ENCODE measurements at regions of chr4 and their contacts with region 1.

Region 1: GRCh38 chr4:164779811-164780216 is 25.9 kb downstream of the SMIM31 start:
- DNase-seq: peak; percentile 52 to 69
- H3K4me3 ChIP-seq: no peak overlapping the region
- H3K4me3 Mint-ChIP-seq: no peak overlapping the region
- H3K27ac Mint-ChIP-seq: no peak overlapping the region
- H3K4me1 ChIP-seq: peaks cover 20% of the 10 kb centered on the region
- H3K4me1 Mint-ChIP-seq: peaks cover 16% of the 10 kb centered on the region
- H3K27me3 ChIP-seq: no peaks in the 10 kb centered on the region
- H3K27me3 Mint-ChIP-seq: no peaks in the 10 kb centered on the region
- CTCF ChIP-seq: peak; percentile 76 to 78

Region 2: DNA sequence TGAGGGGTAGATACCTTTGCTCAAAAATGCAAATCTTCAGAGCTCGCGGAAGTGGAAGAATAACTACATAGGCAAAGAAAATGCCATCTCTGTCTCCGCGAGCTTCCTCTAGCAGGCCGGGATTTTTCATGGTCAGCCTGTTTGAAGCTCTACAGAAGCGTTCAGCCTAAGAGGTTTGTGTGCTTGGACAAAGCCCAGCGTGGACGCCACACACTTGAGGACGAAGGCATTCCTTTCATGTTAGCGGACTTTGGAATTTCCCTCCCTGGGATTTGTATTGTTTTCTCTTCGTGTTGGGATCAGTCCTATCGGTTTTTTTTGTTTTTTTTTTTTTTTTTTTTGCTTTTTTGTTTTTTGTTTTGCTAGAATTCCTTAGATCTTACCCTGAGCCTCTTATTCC is 27.8 kb after region 1 on chr4:
- CTCF ChIA-PET with region 1: no interaction called
- POLR2A ChIA-PET with region 1: no interaction called
- intact Hi-C with region 1: loop called (anchors 1 kb)
- DNase-seq: peak; percentile 82
- H3K4me3 ChIP-seq: 0 out of 2 replicates have a peak overlapping the region, but pooled peaks have one; percentile 1
- H3K4me3 Mint-ChIP-seq: peak overlapping the region; percentile 33
- H3K27ac Mint-ChIP-seq: peak overlapping the region; percentile 82
- H3K4me1 ChIP-seq: peaks cover 46% of the 10 kb centered on the region
- H3K4me1 Mint-ChIP-seq: peaks cover 11% of the 10 kb centered on the region
- H3K27me3 ChIP-seq: no peaks in the 10 kb centered on the region
- H3K27me3 Mint-ChIP-seq: no peaks in the 10 kb centered on the region
- CTCF ChIP-seq: no peak

Region 3: DNA sequence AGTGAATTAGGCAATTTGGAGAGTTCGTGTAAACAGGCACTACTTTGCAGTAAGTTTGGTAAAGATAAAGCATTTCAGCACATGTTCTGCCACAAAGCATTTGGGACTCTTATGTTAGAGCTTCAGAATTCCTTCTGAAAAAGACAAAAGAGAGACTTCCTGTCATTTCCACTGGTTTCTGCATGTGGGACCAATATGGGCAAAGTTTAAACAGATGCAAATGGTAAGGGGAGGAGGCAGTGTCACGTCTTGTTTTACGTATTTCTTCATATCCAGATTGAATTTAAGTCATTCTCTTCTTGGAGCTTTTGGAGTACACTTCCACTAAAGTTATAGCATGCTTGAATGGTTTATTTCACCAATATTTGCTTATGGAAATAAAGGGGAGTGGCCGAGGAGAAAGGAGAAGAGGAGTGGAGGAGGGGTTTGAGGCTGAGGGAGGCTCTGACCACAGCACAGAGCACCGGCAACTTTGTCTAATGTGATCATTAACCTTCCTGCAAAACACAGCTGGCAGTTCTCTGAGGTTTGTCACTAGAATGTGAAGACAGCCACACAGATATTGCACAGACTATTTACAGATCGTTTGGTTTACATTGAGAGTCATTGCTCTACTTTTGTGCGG is 97.0 kb after region 1 on chr4 and contains the start of gene APELA:
- CTCF ChIA-PET with region 1: no interaction called
- POLR2A ChIA-PET with region 1: no interaction called
- intact Hi-C with region 1: loop called (anchors 1 kb)
- DNase-seq: peak; percentile 71 to 74
- H3K4me3 ChIP-seq: peak within 1 kb of the TSS; percentile 26
- H3K4me3 Mint-ChIP-seq: peak within 1 kb of the TSS; percentile 74
- H3K27ac Mint-ChIP-seq: peak within 1 kb of the TSS; percentile 81
- H3K4me1 ChIP-seq: peaks cover 62% of the 10 kb centered on the region
- H3K4me1 Mint-ChIP-seq: peaks cover 26% of the 10 kb centered on the region
- H3K27me3 ChIP-seq: no peaks in the 10 kb centered on the region
- H3K27me3 Mint-ChIP-seq: no peaks in the 10 kb centered on the region
- CTCF ChIP-seq: no peak
- total RNA-seq, gene APELA: 30.6 and 34.8 TPM in 2 replicates

Region 4: GRCh38 chr4:164888096-164888715 is 108.4 kb after region 1 on chr4:
- CTCF ChIA-PET with region 1: no interaction called
- POLR2A ChIA-PET with region 1: no interaction called
- intact Hi-C with region 1: loop called (anchors 1 kb)
- DNase-seq: no peak
- H3K4me3 ChIP-seq: no peak overlapping the region
- H3K4me3 Mint-ChIP-seq: no peak overlapping the region
- H3K27ac Mint-ChIP-seq: no peak overlapping the region
- H3K4me1 ChIP-seq: 0 out of 2 replicates have a peak, but pooled peaks cover 4% of the 10 kb centered on the region
- H3K4me1 Mint-ChIP-seq: peaks cover 14% of the 10 kb centered on the region
- H3K27me3 ChIP-seq: no peaks in the 10 kb centered on the region
- H3K27me3 Mint-ChIP-seq: no peaks in the 10 kb centered on the region
- CTCF ChIP-seq: no peak

Region 5: DNA sequence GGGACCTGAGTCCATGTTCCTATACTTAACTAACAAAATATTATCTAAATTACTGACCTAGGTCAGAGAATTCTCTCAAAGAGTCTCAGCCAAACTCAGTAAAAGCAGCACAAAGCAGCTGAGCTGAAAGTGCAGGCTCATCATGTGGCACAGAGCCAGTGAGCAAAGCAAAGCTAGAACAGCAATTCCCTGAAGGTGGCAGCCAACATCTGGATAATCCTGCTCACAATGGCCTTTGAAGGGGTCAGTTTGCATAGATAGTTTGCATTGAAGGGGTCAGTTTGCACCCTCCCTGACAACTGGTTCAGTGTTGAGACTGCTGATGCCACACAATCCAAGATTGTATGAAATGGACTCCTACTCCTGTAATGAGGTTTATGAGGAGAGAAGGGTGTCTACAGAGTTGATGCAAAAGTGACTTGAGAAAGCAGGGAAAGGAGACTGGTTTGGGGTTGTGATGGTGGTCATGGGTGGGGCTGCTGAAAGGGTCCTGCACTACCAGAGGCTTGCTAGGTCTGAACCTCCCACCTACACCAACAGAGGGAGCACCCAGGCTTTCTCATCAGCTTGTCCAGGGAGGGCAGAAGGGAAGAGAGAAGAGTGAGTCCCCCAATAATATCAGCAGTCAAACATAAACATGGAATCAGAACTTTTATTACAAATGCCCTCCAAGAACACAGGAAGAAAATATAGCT is 157.9 kb after region 1 on chr4:
- CTCF ChIA-PET with region 1: interaction called, 5 read pairs
- POLR2A ChIA-PET with region 1: interaction called, 4 read pairs
- intact Hi-C with region 1: loop called (anchors 1 kb)
- DNase-seq: peak in 1 of 2 experiments; percentile 33
- H3K4me3 ChIP-seq: no peak overlapping the region
- H3K4me3 Mint-ChIP-seq: no peak overlapping the region
- H3K27ac Mint-ChIP-seq: no peak overlapping the region
- H3K4me1 ChIP-seq: no peaks in the 10 kb centered on the region
- H3K4me1 Mint-ChIP-seq: no peaks in the 10 kb centered on the region
- H3K27me3 ChIP-seq: no peaks in the 10 kb centered on the region
- H3K27me3 Mint-ChIP-seq: no peaks in the 10 kb centered on the region
- CTCF ChIP-seq: peak; percentile 16 to 33

Region 6: GRCh38 chr4:164997324-164997723 is 217.5 kb after region 1 on chr4:
- CTCF ChIA-PET with region 1: no interaction called
- POLR2A ChIA-PET with region 1: no interaction called
- intact Hi-C with region 1: loop called (anchors 2 kb)
- DNase-seq: peak in 1 of 2 experiments; percentile 15
- H3K4me3 ChIP-seq: no peak overlapping the region
- H3K4me3 Mint-ChIP-seq: no peak overlapping the region
- H3K27ac Mint-ChIP-seq: no peak overlapping the region
- H3K4me1 ChIP-seq: no peaks in the 10 kb centered on the region; the same call in 1 of the 2 replicates
- H3K4me1 Mint-ChIP-seq: no peaks in the 10 kb centered on the region
- H3K27me3 ChIP-seq: no peaks in the 10 kb centered on the region
- H3K27me3 Mint-ChIP-seq: no peaks in the 10 kb centered on the region
- CTCF ChIP-seq: no peak

Region 7: DNA sequence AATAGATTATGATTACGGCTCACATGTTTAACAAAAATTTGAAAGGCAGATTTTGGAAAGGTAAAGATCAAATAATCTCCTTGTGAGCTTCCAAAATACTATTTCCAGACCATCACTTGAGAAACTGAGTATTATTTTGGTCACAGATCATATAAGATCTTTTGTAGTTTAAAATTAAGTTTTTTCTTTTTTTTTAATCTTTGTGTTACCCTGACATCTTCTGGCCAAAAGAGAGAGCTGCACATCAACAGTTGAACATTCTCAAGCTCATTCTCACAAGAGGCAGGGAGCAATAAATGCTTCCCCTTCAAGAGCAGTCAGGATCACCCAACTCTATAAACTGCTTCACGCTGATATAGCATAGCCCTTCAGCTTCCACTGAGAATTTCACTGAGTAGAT is 317.0 kb after region 1 on chr4:
- CTCF ChIA-PET with region 1: interaction called, 3 read pairs
- POLR2A ChIA-PET with region 1: no interaction called
- intact Hi-C with region 1: loop called (anchors 5 kb)
- DNase-seq: peak in 1 of 2 experiments; percentile 18
- H3K4me3 ChIP-seq: no peak overlapping the region
- H3K4me3 Mint-ChIP-seq: no peak overlapping the region
- H3K27ac Mint-ChIP-seq: no peak overlapping the region
- H3K4me1 ChIP-seq: no peaks in the 10 kb centered on the region
- H3K4me1 Mint-ChIP-seq: no peaks in the 10 kb centered on the region
- H3K27me3 ChIP-seq: no peaks in the 10 kb centered on the region
- H3K27me3 Mint-ChIP-seq: no peaks in the 10 kb centered on the region
- CTCF ChIP-seq: peak; percentile 54 to 63

Measured in Caco-2 (cell line).